ENCODE measurements at regions of chr3 and their contacts with region 1.

Region 1: GRCh38 chr3:180617049-180617448 is 15.1 kb downstream of the TTC14 start:
- H3K4me3 Mint-ChIP-seq: no peak overlapping the region
- H3K27ac Mint-ChIP-seq: no peak overlapping the region
- H3K4me1 Mint-ChIP-seq: no peaks in the 10 kb centered on the region
- H3K27me3 Mint-ChIP-seq: no peaks in the 10 kb centered on the region

Region 2: GRCh38 chr3:180085122-180085710 is 531.8 kb before region 1 on chr3:
- intact Hi-C with region 1: no loop called
- H3K4me3 Mint-ChIP-seq: no peak overlapping the region
- H3K27ac Mint-ChIP-seq: no peak overlapping the region
- H3K4me1 Mint-ChIP-seq: no peaks in the 10 kb centered on the region
- H3K27me3 Mint-ChIP-seq: no peaks in the 10 kb centered on the region

Region 3: GRCh38 chr3:180223268-180223667 is 393.8 kb before region 1 on chr3:
- intact Hi-C with region 1: no loop called
- H3K4me3 Mint-ChIP-seq: no peak overlapping the region
- H3K27ac Mint-ChIP-seq: no peak overlapping the region
- H3K4me1 Mint-ChIP-seq: no peaks in the 10 kb centered on the region
- H3K27me3 Mint-ChIP-seq: no peaks in the 10 kb centered on the region

Region 4: GRCh38 chr3:180747805-180748361 is 130.8 kb after region 1 on chr3:
- intact Hi-C with region 1: no loop called
- H3K4me3 Mint-ChIP-seq: no peak overlapping the region
- H3K27ac Mint-ChIP-seq: no peak overlapping the region
- H3K4me1 Mint-ChIP-seq: no peaks in the 10 kb centered on the region
- H3K27me3 Mint-ChIP-seq: no peaks in the 10 kb centered on the region

Region 5: DNA sequence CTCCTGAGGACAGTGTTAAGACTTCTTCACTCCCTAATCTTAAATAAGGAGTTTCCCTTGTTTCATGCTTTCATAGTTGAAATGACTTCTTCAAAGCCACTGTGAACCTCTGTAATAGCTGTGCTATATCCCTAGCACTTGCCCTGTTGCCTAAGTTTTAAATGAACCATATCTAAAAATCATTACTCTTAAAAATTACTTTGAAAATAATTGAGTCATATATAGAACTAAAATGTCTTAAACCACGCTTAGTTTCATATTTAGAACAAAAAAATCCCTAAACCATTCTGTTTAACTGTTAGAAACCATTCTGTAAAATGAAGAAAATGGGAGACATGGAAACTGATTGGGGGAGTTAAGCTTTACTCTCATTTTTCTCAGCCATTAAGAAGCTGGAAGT is 342.6 kb after region 1 on chr3:
- intact Hi-C with region 1: loop called (anchors 10 kb)
- H3K4me3 Mint-ChIP-seq: no peak overlapping the region
- H3K27ac Mint-ChIP-seq: no peak overlapping the region
- H3K4me1 Mint-ChIP-seq: no peaks in the 10 kb centered on the region
- H3K27me3 Mint-ChIP-seq: no peaks in the 10 kb centered on the region